MCF 10A (cell line): ENCODE measurements at regions of chr10 and their contacts with region 1.

Region 1: GRCh38 chr10:13160934-13161856 is at the start of gene MCM10:
- DNase-seq: peak; percentile 99
- H3K4me3 Mint-ChIP-seq: peak within 1 kb of the TSS; percentile 85
- H3K27ac Mint-ChIP-seq: peak within 1 kb of the TSS; percentile 81
- H3K4me1 Mint-ChIP-seq: peaks cover 19% of the 10 kb centered on the region
- H3K27me3 Mint-ChIP-seq: no peaks in the 10 kb centered on the region
- CTCF ChIP-seq: peak; percentile 79
- total RNA-seq, gene MCM10: 3.5 and 6.0 TPM in 2 replicates

Region 2: DNA sequence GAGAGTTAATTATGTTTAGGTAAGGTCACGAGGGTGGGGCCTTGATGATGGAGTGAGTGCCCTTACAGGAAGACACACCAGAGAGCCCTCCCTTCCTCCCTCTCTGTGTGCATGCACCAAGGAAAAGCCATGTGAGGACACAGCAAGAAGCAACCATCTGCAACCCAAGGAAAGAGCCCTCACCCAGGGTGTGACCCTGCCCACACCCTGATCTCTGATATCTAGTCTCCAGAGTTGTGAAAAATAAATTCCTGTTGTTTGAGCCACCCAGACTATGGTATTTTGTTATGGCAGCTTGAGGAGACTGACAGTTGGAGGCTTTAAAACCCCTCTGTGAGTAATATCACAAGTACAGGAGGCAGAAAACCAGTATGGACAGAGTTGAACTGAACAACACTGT is 14.8 kb before region 1 on chr10:
- CTCF ChIA-PET with region 1: interaction called, 11 read pairs
- POLR2A ChIA-PET with region 1: interaction called, 5 read pairs
- intact Hi-C with region 1: no loop called
- DNase-seq: no peak
- H3K4me3 Mint-ChIP-seq: no peak overlapping the region
- H3K27ac Mint-ChIP-seq: peak overlapping the region; percentile 74
- H3K4me1 Mint-ChIP-seq: peaks cover 16% of the 10 kb centered on the region
- H3K27me3 Mint-ChIP-seq: no peaks in the 10 kb centered on the region
- CTCF ChIP-seq: no peak

Region 3: DNA sequence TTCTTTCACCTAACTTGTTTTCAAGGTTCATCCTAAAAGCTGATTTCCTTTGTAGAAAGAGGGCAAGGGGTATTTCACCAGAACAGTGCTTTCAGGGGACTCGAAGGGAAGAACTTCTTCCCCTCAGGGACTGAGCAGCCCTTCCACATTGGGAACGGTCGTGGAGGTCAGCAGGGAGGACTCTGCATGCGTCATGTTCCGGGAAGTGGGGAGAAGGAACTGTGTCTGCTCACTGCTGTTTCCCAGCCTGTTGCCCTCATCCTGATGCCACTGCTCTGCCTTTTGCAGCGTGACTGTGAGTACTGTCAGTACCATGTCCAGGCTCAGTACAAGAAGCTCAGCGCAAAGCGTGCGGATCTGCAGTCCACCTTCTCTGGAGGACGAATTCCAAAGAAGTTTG is 27.4 kb after region 1 on chr10:
- CTCF ChIA-PET with region 1: no interaction called
- POLR2A ChIA-PET with region 1: no interaction called
- intact Hi-C with region 1: no loop called
- DNase-seq: no peak
- H3K4me3 Mint-ChIP-seq: no peak overlapping the region
- H3K27ac Mint-ChIP-seq: no peak overlapping the region
- H3K4me1 Mint-ChIP-seq: no peaks in the 10 kb centered on the region
- H3K27me3 Mint-ChIP-seq: no peaks in the 10 kb centered on the region
- CTCF ChIP-seq: no peak

Region 4: DNA sequence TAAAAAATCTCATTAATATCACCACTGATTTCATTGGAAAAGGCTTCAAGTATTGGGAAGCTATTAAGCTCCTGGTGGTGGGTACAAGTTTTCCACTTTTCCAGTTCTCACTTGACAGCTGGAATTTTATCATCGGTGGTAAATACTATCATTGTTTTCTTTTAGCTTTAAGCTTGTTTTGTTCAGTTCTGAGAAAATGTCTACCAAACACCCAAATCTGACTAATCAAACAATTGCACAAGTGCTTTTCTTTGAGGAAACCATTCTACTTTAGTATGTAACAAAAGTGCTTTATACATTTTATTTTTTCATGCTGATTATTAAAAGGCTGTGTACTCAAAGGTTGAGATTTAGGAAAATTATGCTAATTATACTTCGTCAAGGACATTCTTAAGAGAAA is 433.4 kb after region 1 on chr10:
- CTCF ChIA-PET with region 1: no interaction called
- POLR2A ChIA-PET with region 1: no interaction called
- intact Hi-C with region 1: no loop called
- DNase-seq: no peak
- H3K4me3 Mint-ChIP-seq: no peak overlapping the region
- H3K27ac Mint-ChIP-seq: no peak overlapping the region
- H3K4me1 Mint-ChIP-seq: peaks cover 14% of the 10 kb centered on the region
- H3K27me3 Mint-ChIP-seq: no peaks in the 10 kb centered on the region
- CTCF ChIP-seq: no peak